ENCODE measurements at regions of chr1 and their contacts with region 1.

Region 1: DNA sequence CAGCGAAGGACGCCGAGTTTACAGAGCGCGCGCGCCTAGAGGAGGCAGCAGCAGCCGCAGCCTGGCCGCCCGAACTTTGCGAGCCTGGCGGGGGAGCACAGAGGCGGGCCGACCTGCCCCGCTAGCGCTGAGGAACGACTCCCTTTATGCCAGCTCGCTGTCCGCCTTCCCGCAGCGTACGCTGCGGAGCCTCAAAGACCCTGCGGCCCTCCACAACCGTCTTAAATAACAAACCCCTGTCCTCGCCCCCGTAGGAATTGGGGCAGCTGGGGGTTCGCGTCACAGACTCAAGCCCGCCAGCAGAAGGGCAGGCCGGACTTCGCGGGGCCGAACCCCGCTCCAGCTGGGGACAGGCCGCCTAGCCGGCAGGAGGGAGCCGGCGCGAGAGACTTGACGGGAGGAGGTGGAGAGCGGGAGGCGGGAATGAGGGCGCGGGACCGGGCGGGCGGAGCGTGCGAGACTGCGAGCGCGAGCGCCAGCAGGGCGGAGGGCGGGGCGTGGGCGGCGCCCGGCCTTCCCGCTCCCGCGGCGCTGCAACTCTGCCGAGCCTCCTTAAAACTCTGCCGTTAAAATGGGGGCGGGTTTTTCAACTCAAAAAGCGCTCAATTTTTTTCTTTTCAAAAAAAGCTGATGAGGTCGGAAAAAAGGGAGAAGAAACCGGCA is 1.8 kb upstream of the CDKN2C start:
- DNase-seq: peak; percentile 96
- H3K4me3 Mint-ChIP-seq: peak overlapping the region; percentile 89
- H3K27ac Mint-ChIP-seq: peak overlapping the region; percentile 98
- H3K4me1 Mint-ChIP-seq: peaks cover 23% of the 10 kb centered on the region
- H3K27me3 Mint-ChIP-seq: peaks cover 8% of the 10 kb centered on the region

Region 2: GRCh38 chr1:50929376-50929958 is 38.8 kb before region 1 on chr1:
- intact Hi-C with region 1: loop called (anchors 2 kb)
- DNase-seq: no peak
- H3K4me3 Mint-ChIP-seq: no peak overlapping the region
- H3K27ac Mint-ChIP-seq: no peak overlapping the region
- H3K4me1 Mint-ChIP-seq: peaks cover 17% of the 10 kb centered on the region
- H3K27me3 Mint-ChIP-seq: no peaks in the 10 kb centered on the region